Sciatic nerve (tissue), 2 donors: ENCODE measurements at regions of chr9 and their contacts with region 1.

Region 1: GRCh38 chr9:114968671-114969070 is 38.3 kb upstream of the TNFSF8 start:
- DNase-seq: no peak
- ATAC-seq: no peak

Region 2: DNA sequence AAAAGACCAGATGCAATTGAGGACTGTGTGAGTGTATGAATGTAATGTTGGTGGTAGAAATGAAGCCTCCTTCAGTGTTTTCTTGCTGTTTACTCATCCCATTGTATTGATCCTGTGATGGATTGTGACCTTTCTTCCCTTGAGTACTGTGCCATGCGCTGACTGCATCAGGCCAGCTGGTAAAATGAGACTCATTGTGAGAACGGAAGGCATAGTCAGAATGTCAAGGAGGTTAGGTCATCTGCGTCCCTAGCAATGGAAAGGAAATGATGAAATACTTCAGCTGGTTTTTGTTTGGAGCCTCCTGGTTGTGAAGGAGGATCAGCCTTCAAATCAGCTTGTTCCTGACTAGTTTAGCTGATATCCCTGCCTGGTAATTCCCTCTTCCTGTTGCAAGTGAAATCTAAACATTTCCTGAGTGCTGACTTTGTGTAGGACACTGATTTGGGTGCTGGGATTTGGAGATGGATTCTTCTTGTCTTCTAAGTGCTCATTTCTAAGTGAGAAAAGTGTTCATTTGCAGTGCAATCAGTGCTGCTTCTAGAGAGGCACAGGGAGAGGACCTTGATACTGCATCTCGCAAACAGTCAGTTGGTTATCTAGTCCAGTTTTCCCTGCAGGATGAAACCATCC is 73.8 kb before region 1 on chr9:
- intact Hi-C with region 1: no loop called
- DNase-seq: no peak
- ATAC-seq: peak; percentile 74

Region 3: GRCh38 chr9:114921171-114921570 is 47.5 kb before region 1 on chr9:
- intact Hi-C with region 1: loop called (anchors 1 kb)
- DNase-seq: no peak
- ATAC-seq: no peak

Region 4: DNA sequence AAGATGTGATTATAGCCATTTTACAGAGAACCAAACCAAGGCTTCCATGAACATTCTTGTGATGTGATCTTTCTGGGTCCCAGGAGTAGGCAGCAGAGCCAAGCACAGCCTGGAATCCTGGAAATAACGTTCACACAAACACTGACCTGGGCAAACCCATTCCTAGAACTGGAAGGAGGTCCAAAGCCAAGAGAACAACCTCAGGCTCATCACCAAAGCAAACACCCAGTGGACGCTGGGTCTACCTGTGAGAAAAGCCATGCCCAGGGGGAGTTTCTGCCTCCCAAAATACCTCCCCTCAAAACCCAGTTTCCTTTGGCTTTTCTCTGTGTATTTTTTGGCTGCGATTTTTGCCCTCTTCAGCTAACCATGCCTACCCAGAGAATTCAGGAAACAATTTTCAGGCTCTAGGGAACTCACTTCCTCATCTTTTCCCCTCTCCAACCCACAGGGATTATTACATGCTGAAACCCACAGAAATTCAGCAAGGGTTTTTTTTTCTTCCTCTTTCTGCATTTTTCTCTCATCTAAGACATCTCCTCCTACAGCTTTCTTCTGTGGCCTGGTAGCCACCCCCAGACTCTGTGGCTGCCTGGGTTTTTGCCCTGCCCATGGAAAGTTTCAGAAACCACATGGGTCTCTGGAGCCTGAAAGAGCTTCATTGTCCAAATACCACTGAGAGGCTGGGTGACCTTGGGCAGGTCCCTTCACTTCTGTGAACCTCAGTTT is 74.3 kb after region 1 on chr9:
- intact Hi-C with region 1: no loop called
- DNase-seq: no peak
- ATAC-seq: peak; percentile 93